ENCODE measurements at regions of chr3 and their contacts with region 1.

Region 1: DNA sequence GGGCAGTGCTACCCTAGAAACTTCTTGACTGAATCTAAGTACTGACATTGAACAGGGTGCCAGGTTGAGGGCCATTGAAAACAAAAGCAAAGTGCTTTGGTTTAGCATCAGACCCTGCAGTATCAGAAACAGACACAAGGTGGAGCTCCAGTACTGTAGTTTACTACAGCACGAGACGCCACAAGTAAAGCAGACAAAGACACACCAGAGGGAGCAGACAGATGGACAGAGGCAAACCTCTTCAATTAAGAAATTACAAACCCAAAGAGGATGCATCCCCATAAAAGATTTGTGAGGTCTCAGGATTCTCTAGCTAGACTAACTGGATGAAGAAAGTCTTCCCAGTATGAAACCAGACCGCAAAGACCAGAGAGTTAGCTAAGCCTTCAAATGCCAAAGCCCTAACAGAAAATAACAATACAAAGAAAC is 16.6 kb downstream of the TOP2B start:
- DNase-seq: peak; percentile 56
- H3K4me3 ChIP-seq: no peak overlapping the region
- H3K27ac ChIP-seq: no peak overlapping the region
- H3K27me3 ChIP-seq: no peaks in the 10 kb centered on the region
- CTCF ChIP-seq: peak; percentile 95

Region 2: DNA sequence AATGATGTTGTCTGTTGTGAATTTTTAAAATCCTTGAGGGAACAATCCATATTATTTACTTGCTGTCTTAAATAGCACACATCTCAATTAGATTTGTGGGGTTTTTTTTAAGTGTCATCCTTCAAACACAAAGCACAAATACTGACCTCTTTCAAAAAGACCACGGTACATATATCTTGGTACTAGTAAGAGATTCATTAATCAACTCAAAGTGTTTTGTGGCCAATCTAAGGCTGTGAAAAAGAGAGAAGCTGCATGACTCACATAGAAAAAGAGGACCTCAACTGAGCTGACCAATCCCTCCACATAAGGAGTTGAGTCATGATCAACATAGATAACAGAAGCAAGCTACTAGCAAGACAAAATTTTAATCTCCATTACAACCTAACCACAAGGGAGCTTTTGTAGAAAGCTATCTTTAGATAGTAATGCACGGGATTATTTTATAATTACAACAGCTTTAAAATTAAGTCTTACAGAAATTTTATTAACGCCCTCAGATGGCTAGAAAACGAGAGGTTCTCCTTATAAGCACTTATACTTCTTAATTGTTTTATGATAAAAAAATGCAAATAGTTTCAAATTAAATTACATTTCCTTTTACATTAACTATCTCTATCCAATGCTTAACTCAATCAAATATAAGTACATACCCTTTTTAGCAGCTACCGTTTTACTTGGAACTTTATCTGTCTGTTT is 43.9 kb before region 1 on chr3:
- CTCF ChIA-PET with region 1: interaction called, 13 read pairs
- POLR2A ChIA-PET with region 1: no interaction called
- DNase-seq: peak; percentile 33
- H3K4me3 ChIP-seq: no peak overlapping the region
- H3K27ac ChIP-seq: no peak overlapping the region
- H3K27me3 ChIP-seq: no peaks in the 10 kb centered on the region
- CTCF ChIP-seq: no peak

Region 3: DNA sequence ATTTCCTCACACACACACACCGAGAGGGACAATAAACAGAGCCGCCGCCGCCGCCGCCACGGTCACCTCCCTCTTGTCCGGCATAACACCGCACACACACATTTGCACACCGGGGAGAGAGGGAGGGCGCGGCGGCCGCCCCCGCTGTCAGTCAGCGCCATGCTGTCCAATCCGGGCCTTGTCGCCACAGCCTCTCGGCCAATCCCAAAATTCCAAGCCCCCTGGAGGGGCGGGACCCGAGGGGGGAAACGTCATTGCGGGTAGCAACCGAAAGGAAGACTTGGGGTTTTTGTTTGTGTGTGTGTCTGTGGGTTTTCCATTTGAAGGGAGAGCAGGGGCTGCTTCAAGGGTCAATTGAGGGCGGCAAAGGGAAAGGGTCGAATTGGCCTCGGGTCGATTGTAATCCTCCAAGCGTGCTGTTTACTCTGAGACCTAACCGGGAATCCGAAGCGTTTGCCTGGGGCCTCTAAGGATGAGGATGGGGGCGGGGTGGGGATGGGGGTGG is 16.7 kb after region 1 on chr3 and contains the start of gene TOP2B:
- CTCF ChIA-PET with region 1: interaction called, 41 read pairs
- POLR2A ChIA-PET with region 1: no interaction called
- DNase-seq: peak; percentile 85
- H3K4me3 ChIP-seq: peak within 1 kb of the TSS; percentile 77
- H3K27ac ChIP-seq: peak within 1 kb of the TSS; percentile 79
- H3K27me3 ChIP-seq: no peaks in the 10 kb centered on the region
- CTCF ChIP-seq: no peak
- polyA plus RNA-seq, gene TOP2B: 76.9 and 95.9 TPM in 2 replicates

Region 4: GRCh38 chr3:25831578-25831977 is 183.5 kb after region 1 on chr3:
- CTCF ChIA-PET with region 1: interaction called, 72 read pairs
- POLR2A ChIA-PET with region 1: no interaction called
- DNase-seq: no peak
- H3K4me3 ChIP-seq: no peak overlapping the region
- H3K27ac ChIP-seq: no peak overlapping the region
- H3K27me3 ChIP-seq: no peaks in the 10 kb centered on the region
- CTCF ChIP-seq: peak; percentile 61

Region 5: DNA sequence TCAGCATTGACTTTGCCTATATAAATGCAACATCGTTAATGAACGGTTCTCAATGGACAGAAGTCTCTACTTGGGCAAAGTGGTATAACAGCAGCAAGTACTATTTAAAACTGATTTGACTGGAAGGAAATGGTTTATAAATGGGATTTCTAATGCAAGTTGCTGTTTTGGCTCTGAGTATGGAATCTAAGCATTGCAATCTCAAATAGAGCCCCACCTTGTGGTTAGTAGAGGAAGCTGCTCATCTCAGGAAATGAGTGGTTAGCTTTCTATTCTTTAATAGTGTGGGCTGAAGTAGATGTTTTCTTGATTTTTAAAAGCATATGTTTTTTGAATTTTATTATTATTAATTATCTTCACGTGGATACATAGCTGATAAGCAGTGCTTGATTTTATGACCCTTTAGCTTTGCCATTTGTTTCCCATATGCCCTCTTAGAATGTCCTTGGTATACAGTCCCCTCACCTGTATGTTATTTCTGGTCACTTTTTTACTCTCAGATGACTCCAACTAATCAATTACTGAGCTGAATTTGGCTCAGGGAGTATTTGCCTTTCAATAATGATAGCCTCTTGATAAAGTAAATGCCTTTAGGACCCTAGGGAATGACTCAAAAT is 208.9 kb after region 1 on chr3:
- CTCF ChIA-PET with region 1: interaction called, 140 read pairs
- POLR2A ChIA-PET with region 1: no interaction called
- DNase-seq: peak; percentile 15
- H3K4me3 ChIP-seq: no peak overlapping the region
- H3K27ac ChIP-seq: no peak overlapping the region
- H3K27me3 ChIP-seq: no peaks in the 10 kb centered on the region
- CTCF ChIP-seq: peak; percentile 88

Measured in AG04450 (cell line).